ENCODE measurements at regions of chr3 and their contacts with region 1.

Region 1: GRCh38 chr3:66253790-66254620 is 33.2 kb downstream of the SLC25A26 start:
- DNase-seq: no peak
- ATAC-seq: no peak
- H3K4me3 Mint-ChIP-seq: no peak overlapping the region
- H3K27ac Mint-ChIP-seq: no peak overlapping the region
- H3K4me1 Mint-ChIP-seq: peaks cover 2% of the 10 kb centered on the region
- H3K27me3 Mint-ChIP-seq: no peaks in the 10 kb centered on the region
- CTCF ChIP-seq: peak; percentile 91

Region 2: DNA sequence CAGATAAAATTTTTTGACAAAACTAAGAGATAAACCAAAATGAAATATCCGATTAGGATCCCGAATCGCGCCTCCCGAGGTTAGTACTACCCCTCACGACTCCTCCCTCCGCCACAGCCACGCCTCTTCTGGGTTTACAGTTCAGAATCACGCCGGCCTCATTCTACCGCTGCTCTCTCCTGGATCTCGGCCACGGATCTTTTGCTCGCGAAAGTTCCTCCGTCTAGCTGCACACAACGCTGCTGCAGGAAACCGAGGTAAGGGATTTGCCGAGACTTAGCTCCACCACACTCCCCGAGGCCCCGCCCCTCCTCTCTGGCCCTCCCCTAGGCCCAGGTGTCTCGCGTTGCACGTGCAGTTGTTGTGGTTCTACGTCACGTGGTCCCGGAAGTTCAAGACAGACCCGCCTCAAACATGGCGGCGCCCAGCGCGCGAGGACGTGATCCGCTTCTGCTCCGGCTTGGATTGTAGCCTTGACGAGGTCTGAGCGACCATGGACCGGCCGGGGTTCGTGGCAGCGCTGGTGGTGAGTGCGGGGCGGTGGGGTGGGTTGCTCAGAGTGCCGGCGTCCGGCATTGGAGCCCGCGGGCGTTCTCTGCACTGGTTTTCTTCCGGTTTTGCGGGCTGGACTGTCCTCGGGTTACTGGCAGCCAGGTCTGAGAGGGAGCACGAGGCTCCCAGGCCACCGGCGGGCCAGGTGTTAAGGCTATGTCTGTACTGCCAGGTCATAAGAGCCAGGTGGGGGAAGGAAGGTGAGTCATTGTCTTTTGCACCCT is 33.2 kb before region 1 on chr3 and contains the start of gene SLC25A26:
- CTCF ChIA-PET with region 1: interaction called, 12 read pairs
- POLR2A ChIA-PET with region 1: interaction called, 3 read pairs
- intact Hi-C with region 1: no loop called
- DNase-seq: peak; percentile 99
- ATAC-seq: peak; percentile 96
- H3K4me3 Mint-ChIP-seq: peak within 1 kb of the TSS; percentile 97
- H3K27ac Mint-ChIP-seq: peak within 1 kb of the TSS; percentile 95
- H3K4me1 Mint-ChIP-seq: peaks cover 36% of the 10 kb centered on the region
- H3K27me3 Mint-ChIP-seq: no peaks in the 10 kb centered on the region
- CTCF ChIP-seq: no peak
- total RNA-seq, gene SLC25A26: 28.5 to 31.0 TPM

Region 3: GRCh38 chr3:66270701-66271100 is 16.7 kb after region 1 on chr3:
- CTCF ChIA-PET with region 1: interaction called, 16 read pairs
- POLR2A ChIA-PET with region 1: no interaction called
- intact Hi-C with region 1: no loop called
- DNase-seq: no peak
- ATAC-seq: no peak
- H3K4me3 Mint-ChIP-seq: no peak overlapping the region
- H3K27ac Mint-ChIP-seq: no peak overlapping the region
- H3K4me1 Mint-ChIP-seq: no peaks in the 10 kb centered on the region
- H3K27me3 Mint-ChIP-seq: no peaks in the 10 kb centered on the region
- CTCF ChIP-seq: no peak

Region 4: DNA sequence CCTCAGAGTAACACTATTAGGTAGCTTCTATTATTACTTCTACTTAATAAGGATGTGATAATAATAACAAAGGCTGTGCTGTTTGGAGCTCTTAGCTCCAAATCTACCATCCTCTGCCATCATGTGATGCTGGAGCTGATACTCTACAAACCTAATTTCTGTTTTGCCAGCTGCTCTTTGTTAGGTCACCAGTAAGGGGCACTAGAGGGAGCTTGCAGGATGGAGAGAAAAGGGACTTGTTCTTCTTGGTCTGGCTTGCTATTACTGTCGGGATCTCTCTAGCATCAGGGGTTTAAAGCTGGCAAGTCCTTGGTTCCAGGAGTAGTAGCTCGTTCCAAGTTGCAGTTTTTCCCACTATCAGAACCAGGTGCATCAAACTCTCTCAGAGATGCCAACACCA is 549.2 kb after region 1 on chr3:
- CTCF ChIA-PET with region 1: interaction called, 11 read pairs
- POLR2A ChIA-PET with region 1: no interaction called
- intact Hi-C with region 1: no loop called
- DNase-seq: no peak
- ATAC-seq: no peak
- H3K4me3 Mint-ChIP-seq: no peak overlapping the region
- H3K27ac Mint-ChIP-seq: no peak overlapping the region
- H3K4me1 Mint-ChIP-seq: peaks cover 7% of the 10 kb centered on the region
- H3K27me3 Mint-ChIP-seq: peaks cover 13% of the 10 kb centered on the region
- CTCF ChIP-seq: no peak

Region 5: DNA sequence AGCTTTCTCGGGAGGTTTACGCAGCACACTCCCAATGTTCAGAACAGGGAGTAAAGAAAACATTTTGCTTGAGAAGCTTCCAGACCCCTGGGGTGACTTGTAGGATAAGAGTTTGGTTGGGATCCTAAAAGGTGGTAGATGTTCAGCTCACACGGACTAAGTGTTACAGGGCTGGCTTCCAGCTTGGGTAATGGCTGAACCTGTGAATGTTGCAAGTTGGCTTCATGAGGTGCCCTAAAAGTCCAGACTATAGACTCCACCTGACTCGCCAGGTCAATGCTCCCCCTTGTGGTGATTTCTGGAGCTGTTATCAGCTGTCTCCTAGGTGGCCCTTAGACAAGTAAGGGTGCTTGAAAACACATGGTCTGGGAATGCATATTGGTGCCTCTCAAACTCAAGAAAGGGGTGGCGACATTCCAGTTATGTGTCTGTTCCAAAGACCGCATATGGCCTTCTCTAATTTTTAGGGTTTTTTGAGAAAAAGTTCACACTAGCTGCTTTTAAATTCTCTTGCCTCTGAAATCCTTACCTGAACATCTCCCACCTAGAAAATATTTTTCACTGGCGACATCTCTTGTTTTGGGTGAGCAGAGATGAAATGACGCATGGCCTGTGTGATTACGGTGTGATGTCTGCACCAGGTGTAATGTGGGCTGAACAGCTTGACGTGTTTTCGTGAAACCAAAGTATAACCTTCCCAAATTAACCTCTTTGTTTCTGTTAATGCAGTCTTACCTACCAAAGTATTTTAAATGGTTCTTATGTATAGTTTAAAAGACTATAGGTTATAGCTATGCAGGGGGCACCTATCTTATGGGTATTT is 568.4 kb after region 1 on chr3:
- CTCF ChIA-PET with region 1: interaction called, 34 read pairs
- POLR2A ChIA-PET with region 1: no interaction called
- intact Hi-C with region 1: no loop called
- DNase-seq: peak; percentile 73
- ATAC-seq: peak; percentile 77
- H3K4me3 Mint-ChIP-seq: no peak overlapping the region
- H3K27ac Mint-ChIP-seq: no peak overlapping the region
- H3K4me1 Mint-ChIP-seq: no peaks in the 10 kb centered on the region
- H3K27me3 Mint-ChIP-seq: no peaks in the 10 kb centered on the region
- CTCF ChIP-seq: peak; percentile 68

Region 6: DNA sequence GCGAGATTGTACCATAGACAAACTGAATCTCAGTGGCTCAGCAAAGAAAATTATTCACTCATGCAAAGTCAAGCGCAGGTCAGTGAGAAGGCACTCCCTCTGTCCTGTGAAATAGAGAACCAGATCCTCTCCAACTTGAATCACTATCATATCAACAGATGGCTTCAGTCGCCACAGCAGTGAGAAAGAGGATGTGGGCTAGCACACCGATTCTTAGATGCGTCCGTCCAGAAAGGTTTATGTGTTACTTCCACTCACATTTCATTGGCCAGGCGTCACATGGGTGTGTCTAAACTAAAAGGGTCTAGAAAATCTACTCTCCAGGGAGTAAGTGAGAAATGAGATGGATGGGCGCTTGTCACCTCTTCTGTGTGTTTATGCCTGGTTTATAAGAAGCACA is 602.5 kb after region 1 on chr3:
- CTCF ChIA-PET with region 1: no interaction called
- POLR2A ChIA-PET with region 1: no interaction called
- intact Hi-C with region 1: no loop called
- DNase-seq: peak; percentile 4
- ATAC-seq: no peak
- H3K4me3 Mint-ChIP-seq: no peak overlapping the region
- H3K27ac Mint-ChIP-seq: no peak overlapping the region
- H3K4me1 Mint-ChIP-seq: no peaks in the 10 kb centered on the region
- H3K27me3 Mint-ChIP-seq: peaks cover 7% of the 10 kb centered on the region
- CTCF ChIP-seq: no peak

Region 7: GRCh38 chr3:67030785-67031740 is 777.1 kb after region 1 on chr3:
- CTCF ChIA-PET with region 1: no interaction called
- POLR2A ChIA-PET with region 1: no interaction called
- intact Hi-C with region 1: no loop called
- DNase-seq: no peak
- ATAC-seq: no peak
- H3K4me3 Mint-ChIP-seq: no peak overlapping the region
- H3K27ac Mint-ChIP-seq: no peak overlapping the region
- H3K4me1 Mint-ChIP-seq: peaks cover 8% of the 10 kb centered on the region
- H3K27me3 Mint-ChIP-seq: no peaks in the 10 kb centered on the region
- CTCF ChIP-seq: no peak